Activated naive CD4-positive, alpha-beta T cell treated with anti-CD3 and anti-CD28 coated beads for 36 hours (primary cell): ENCODE measurements at regions of chr16 and their contacts with region 1.

Region 1: DNA sequence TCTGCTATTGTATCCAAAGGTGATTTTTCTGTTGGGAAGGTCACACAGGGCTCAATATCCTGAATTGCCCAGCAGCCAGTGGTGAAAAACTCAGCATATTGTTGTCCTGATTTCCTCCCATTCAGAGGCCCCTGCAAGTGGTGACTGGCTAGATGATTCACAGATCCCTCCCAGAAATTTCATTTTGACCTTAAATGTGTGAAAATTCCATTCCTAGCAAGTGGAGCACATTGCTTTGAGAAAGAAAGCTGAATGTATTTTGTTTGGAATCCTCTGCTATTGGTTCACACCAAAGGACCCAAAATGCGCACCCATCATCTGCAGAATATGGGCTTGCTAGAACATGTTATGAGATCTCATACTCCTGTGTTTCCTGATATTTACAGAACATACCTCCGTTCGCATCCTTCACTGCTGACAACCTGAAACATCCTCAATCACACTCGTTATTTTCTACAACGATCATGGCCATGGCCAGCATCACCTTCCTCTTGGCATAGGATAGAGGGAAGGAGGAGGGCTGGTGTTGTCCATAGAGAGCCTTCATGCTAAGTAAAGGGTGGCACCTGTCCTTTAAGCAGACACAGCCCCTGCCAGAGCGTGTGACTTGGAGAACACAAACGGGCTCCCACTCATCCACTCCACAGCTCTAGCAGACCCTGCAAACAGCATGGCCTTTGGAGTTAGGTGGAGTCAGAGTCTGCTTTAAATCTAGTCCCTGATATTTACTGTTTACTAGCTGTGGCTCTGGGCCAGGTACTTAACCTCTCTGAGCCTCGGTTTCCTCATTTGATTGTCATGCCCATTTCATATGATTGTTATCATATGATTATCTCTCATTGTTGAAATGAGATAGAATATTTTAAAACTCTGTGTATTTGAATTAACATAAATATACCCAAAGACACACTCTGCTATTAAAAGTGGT is 30.4 kb upstream of the NFAT5 start:
- DNase-seq: no peak
- H3K4me3 Mint-ChIP-seq: no peak overlapping the region
- H3K27ac Mint-ChIP-seq: no peak overlapping the region
- H3K4me1 Mint-ChIP-seq: peaks cover 26% of the 10 kb centered on the region
- H3K27me3 Mint-ChIP-seq: no peaks in the 10 kb centered on the region

Region 2: GRCh38 chr16:69424053-69424934 is 111.1 kb before region 1 on chr16 and contains the start of gene CYB5B:
- CTCF ChIA-PET with region 1: no interaction called
- intact Hi-C with region 1: loop called (anchors 1 kb)
- DNase-seq: peak; percentile 99
- H3K4me3 Mint-ChIP-seq: peak within 1 kb of the TSS; percentile 95
- H3K27ac Mint-ChIP-seq: peak within 1 kb of the TSS; percentile 93
- H3K4me1 Mint-ChIP-seq: peaks cover 40% of the 10 kb centered on the region
- H3K27me3 Mint-ChIP-seq: no peaks in the 10 kb centered on the region
- total RNA-seq, gene CYB5B: 160 to 172 TPM

Region 3: DNA sequence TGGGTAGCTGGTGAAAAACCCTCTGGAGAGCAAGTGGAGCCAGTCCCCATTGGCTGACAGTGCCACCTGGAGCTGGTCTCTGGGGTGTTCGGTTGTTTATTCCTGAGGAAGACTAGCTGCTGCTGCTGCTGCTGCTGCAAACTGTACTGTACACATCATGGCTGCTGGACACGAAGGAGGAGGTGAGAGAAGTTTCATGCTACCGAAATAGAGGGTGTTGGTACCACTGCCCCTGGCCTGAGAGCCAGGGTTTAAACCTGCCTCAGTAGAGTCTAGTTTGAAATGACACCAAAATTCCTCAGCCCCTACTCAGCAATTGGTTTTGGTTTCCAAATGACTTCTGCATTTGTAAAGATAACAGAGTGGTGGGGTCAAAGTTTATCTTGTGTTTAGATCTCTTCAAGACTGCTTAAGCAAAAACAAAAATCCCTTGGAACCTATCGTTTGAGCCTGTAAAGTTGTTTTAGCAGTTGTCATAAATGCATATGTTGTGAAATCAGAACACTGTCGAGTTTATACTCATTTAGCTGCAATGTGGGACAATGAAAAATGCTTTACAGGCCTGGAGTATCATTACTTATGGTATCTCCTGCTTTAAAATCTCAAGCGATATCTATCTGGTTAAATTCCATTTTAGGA is 70.2 kb before region 1 on chr16:
- CTCF ChIA-PET with region 1: interaction called, 3 read pairs
- intact Hi-C with region 1: loop called (anchors 2 kb)
- DNase-seq: peak; percentile 28
- H3K4me3 Mint-ChIP-seq: no peak overlapping the region
- H3K27ac Mint-ChIP-seq: no peak overlapping the region
- H3K4me1 Mint-ChIP-seq: peaks cover 43% of the 10 kb centered on the region
- H3K27me3 Mint-ChIP-seq: no peaks in the 10 kb centered on the region

Region 4: GRCh38 chr16:69520800-69521602 is 14.4 kb before region 1 on chr16:
- CTCF ChIA-PET with region 1: no interaction called
- intact Hi-C with region 1: loop called (anchors 1 kb)
- DNase-seq: peak; percentile 72
- H3K4me3 Mint-ChIP-seq: no peak overlapping the region
- H3K27ac Mint-ChIP-seq: peak overlapping the region; percentile 91
- H3K4me1 Mint-ChIP-seq: peaks cover 21% of the 10 kb centered on the region
- H3K27me3 Mint-ChIP-seq: no peaks in the 10 kb centered on the region